ENCODE measurements at regions of chr2 and their contacts with region 1.

Region 1: GRCh38 chr2:7440977-7441376 is 523.8 kb downstream of the RNF144A start:
- H3K4me3 ChIP-seq: no peak overlapping the region
- H3K27ac ChIP-seq: no peak overlapping the region
- H3K4me1 ChIP-seq: no peaks in the 10 kb centered on the region
- CTCF ChIP-seq: no peak

Region 2: DNA sequence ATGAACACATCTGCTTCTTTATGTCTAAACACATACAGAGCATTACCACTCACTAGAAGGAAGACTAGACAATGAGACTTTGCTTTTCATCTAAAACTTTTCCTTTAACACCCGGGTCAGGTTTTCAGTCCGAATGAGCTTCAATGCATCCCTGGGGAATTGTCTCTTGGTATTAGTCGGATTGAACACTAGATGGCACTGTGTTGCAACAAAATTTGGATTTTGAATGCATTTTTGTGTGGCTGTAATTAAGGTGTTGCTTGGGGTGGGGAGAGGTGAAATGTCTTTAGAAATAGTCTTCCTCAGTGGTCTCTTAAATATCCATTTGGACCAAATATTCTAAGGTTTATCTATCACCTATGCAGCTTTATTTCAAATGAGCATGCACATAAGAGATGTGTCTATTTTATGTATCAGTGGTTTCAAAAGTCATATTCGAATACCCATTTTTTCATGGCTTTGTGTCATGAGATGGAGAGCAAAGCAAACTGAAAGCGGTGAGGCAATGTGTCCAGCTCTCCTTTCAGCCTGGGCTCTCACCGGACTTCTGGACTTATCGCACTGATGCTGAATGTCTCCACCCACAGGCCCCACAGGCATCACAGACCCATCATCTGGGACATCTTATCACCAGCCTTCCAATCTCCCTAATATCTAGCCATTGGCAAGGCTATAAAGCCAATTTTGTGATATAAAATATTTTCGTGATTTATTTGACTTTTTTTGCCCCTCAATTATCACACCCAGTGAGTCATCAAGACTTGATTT is 13.5 kb before region 1 on chr2:
- CTCF ChIA-PET with region 1: interaction called, 12 read pairs
- POLR2A ChIA-PET with region 1: no interaction called
- H3K4me3 ChIP-seq: no peak overlapping the region
- H3K27ac ChIP-seq: no peak overlapping the region
- H3K4me1 ChIP-seq: no peaks in the 10 kb centered on the region
- CTCF ChIP-seq: no peak

Region 3: DNA sequence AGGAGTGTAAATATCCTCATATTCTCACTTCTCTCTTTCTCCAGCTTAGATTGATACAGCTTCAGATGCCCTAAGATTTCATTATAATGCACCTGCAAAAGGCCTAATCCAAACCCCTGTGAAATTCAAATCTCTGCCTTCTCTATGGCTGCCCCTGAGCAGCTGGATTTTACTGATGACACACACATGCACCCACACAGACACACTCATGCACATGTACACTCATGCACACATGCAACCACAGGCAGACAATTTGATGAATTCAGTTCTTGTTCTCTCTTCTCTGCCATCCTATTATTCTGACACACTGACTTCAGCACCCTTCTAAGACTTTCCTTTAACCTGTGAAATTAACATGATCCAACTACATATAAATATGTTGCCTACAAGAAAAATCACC is 39.5 kb after region 1 on chr2:
- CTCF ChIA-PET with region 1: no interaction called
- POLR2A ChIA-PET with region 1: no interaction called
- H3K4me3 ChIP-seq: no peak overlapping the region
- H3K27ac ChIP-seq: no peak overlapping the region
- H3K4me1 ChIP-seq: no peaks in the 10 kb centered on the region
- CTCF ChIP-seq: no peak

Measured in HEK293 (cell line).